Breast epithelium (tissue), 4 donors: ENCODE measurements at regions of chr3 and their contacts with region 1.

Region 1: DNA sequence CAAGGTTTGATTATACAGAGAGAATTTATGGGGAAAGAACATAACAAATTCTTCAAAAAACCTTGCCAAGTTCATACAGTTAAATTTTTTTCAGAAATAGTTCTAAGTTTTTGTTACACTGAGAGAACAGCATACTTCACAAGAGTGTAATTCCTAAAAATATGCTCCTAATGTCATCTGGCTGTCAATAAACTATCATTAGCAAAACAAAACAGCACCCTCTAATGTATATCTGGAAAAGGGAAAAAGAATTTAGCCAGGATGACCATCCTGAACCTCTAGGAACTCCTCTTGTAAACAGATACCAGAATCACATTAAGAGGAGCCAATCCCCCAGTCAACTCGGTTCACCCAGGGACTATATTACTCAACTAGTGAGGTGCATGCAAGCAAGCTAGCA is 63.3 kb downstream of the RAD18 start:
- DNase-seq: no peak
- H3K4me3 ChIP-seq: no peak overlapping the region
- H3K27ac ChIP-seq: no peak overlapping the region
- H3K4me1 ChIP-seq: no peaks in the 10 kb centered on the region
- H3K27me3 ChIP-seq: no peaks in the 10 kb centered on the region
- CTCF ChIP-seq: no peak
- POLR2A ChIP-seq: no peak

Region 2: DNA sequence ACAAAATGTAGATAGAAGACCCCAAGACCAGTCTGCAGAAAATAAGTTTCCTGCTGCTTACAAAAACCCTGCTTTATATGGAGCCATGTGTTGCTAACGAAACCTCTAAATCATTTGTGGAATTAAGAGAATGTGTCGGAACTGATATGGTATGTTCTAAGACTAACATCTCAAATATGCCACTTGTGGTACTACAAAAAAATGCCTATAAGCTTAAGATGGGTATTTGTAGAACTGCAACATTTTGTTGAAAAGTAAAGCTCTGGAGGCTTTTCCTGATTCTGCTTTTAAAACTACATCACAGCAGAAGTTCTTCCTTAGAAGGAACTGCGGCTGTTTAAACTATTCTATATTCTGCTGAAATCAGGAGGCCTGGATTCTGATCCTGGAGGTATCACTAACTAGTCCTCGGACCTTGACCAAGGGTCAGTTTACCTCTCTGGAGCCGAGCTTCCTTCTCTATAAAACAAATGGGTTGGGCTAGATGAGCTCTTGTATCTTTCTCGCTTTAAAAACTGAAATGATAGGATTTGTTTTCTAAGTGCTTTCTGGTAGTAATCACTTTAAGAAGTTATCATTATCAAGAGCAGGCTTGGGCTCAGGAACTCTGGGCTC is 11.6 kb before region 1 on chr3:
- intact Hi-C with region 1: loop called (anchors 1 kb)
- DNase-seq: no peak
- H3K4me3 ChIP-seq: no peak overlapping the region
- H3K27ac ChIP-seq: no peak overlapping the region
- H3K4me1 ChIP-seq: no peaks in the 10 kb centered on the region
- H3K27me3 ChIP-seq: no peaks in the 10 kb centered on the region
- CTCF ChIP-seq: no peak
- POLR2A ChIP-seq: no peak

Region 3: GRCh38 chr3:9890249-9891071 is 990.5 kb after region 1 on chr3 and contains the start of gene JAGN1:
- intact Hi-C with region 1: no loop called
- DNase-seq: peak; percentile 84 to 90
- H3K4me3 ChIP-seq: peak within 1 kb of the TSS; percentile 78 to 100 (median 97)
- H3K27ac ChIP-seq: peak within 1 kb of the TSS; percentile 99 to 100
- H3K4me1 ChIP-seq: no peaks in the 10 kb centered on the region
- H3K27me3 ChIP-seq: no peaks in the 10 kb centered on the region
- CTCF ChIP-seq: no peak
- POLR2A ChIP-seq: peak; percentile 86
- total RNA-seq, gene JAGN1: 34.1 to 73.1 (median 56.5) TPM